Activated CD8-positive, alpha-beta T cell treated with anti-CD3 and anti-CD28 coated beads, Interleukin-2, amount 10 ng/mL, durations not matched to agents 7 days and 5 days (primary cell): ENCODE measurements at regions of chr18 and their contacts with region 1.

Region 1: GRCh38 chr18:35005963-35006577 is 35.1 kb upstream of the MAPRE2 start:
- DNase-seq: peak; percentile 35
- ATAC-seq: peak; percentile 85
- H3K4me3 Mint-ChIP-seq: no peak overlapping the region
- H3K27ac Mint-ChIP-seq: no peak overlapping the region
- H3K4me1 Mint-ChIP-seq: no peaks in the 10 kb centered on the region
- H3K27me3 Mint-ChIP-seq: no peaks in the 10 kb centered on the region

Region 2: DNA sequence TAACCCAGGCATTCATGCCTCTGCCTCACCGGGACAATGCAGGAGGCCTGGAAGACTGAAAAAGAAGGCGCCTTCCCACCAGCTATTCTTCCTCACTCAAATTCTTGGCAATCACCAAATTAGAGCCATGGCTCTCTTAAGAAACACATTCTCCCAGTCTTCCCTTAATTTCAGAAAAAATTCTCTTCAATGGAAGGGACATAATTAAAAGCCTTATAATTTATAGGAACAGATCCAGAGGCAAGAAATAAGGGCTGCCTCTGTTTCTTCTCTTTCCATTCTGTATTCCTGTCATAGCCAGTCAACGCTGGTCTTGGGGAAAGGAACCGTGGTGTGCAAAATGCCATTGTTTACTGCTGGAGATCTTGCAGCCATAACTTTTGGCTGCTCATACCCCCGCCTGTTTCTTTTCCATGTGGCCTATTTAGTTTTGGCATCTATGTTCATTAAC is 263.2 kb before region 1 on chr18:
- CTCF ChIA-PET with region 1: no interaction called
- POLR2A ChIA-PET with region 1: no interaction called
- DNase-seq: no peak
- ATAC-seq: no peak
- H3K4me3 Mint-ChIP-seq: no peak overlapping the region
- H3K27ac Mint-ChIP-seq: no peak overlapping the region
- H3K4me1 Mint-ChIP-seq: no peaks in the 10 kb centered on the region
- H3K27me3 Mint-ChIP-seq: no peaks in the 10 kb centered on the region

Region 3: DNA sequence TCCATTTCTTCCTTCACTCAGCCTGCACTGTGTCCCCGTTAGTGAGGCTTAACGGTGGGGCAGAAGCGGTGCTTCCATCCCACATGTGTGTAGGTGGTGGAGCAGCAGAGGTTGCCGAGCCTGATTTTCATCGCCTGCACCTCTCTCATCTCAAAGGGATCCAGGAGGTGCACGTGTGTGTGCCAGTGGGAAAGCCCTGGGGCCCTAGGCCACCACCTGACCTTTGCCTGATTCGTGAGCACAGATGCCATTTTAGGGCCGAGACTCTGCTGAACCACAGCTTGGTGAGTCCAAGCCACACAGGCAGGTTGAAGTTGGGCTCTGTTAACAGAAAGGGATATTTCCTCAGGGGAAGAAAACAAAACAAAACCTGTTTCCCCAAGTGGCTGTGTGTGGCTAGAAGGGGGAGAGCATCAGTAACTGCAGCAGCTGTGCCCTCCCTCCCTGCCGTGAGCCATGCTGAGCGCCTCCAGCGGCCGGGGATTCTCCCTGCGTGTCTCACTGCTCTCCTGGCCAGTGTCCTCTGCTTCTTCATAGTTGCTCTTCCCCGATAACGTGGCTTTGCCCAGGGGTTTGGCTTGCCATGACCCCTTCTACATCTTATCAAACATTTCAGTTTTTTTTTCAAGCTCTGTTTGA is 116.6 kb after region 1 on chr18:
- CTCF ChIA-PET with region 1: interaction called, 11 read pairs
- POLR2A ChIA-PET with region 1: no interaction called
- DNase-seq: peak; percentile 48
- ATAC-seq: peak; percentile 82
- H3K4me3 Mint-ChIP-seq: no peak overlapping the region
- H3K27ac Mint-ChIP-seq: peak overlapping the region; percentile 27
- H3K4me1 Mint-ChIP-seq: peaks cover 22% of the 10 kb centered on the region
- H3K27me3 Mint-ChIP-seq: no peaks in the 10 kb centered on the region

Region 4: GRCh38 chr18:35143622-35144596 is 137.8 kb after region 1 on chr18:
- CTCF ChIA-PET with region 1: interaction called, 23 read pairs
- POLR2A ChIA-PET with region 1: no interaction called
- DNase-seq: peak; percentile 42
- ATAC-seq: peak; percentile 58
- H3K4me3 Mint-ChIP-seq: no peak overlapping the region
- H3K27ac Mint-ChIP-seq: no peak overlapping the region
- H3K4me1 Mint-ChIP-seq: peaks cover 6% of the 10 kb centered on the region
- H3K27me3 Mint-ChIP-seq: no peaks in the 10 kb centered on the region